GM13976 (cell line): ENCODE measurements at regions of chr1 and their contacts with region 1.

Region 1: GRCh38 chr1:244796718-244797406 is 38.6 kb upstream of the COX20 start:
- DNase-seq: peak; percentile 57
- CTCF ChIP-seq: peak; percentile 83

Region 2: DNA sequence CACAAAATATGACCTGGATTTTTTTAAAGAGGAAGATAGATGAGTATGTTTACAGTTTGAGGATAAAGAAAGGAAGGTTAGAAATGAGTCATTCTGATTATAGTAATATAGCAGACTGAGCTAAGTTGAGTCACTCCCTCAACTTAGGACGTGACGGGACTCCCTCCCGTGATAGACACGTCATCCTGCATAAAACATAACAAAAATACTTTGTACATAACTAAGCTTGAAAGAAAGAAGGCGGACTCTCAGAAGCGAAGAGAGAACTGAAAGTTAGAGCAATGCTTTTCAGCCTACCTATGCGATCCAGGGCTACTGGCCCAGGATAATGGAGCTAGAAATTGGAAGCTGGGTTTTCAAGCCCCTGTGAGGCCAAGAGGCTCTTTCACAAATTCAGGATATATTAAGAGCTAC is 196.9 kb before region 1 on chr1:
- in situ Hi-C with region 1: loop called (anchors 10 kb)
- DNase-seq: peak; percentile 77
- CTCF ChIP-seq: no peak

Region 3: DNA sequence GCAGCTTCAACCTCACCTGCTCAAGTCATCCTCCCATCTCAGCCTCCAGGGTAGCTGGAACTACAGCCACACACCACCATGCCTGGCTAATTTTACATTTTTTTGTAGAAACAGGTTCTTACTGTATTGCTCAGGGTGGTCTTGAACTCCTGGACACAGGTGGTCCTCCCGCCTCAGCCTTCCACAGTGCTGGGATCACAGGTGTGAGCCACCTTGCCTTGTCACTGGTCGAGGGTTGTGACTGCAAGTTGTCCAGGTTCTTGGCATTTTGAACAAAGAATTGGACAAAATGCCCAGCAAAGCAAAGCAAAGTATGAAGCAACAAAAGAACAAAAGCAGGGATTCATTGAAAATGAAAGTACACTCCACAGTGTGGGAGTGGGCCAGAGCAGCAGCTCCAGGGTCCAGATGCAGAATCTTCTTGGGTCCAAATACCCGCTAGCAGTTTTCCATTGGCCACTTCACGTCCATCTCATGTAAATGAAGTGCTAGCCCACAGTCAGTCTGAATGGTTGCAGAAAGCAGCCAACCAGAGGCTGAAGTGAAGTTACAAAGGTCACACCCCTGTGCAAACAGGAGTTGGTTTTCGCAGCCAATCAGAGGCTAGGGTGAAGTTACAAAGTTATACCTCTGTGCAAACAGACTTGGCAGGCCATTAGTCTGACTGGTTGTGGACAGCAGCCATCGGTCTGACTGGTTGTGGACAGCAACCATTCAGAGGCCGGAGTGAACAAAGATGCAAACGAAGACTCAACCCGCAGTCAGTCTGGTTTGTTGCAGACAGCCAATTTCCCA is 248.4 kb after region 1 on chr1:
- in situ Hi-C with region 1: loop called (anchors 5 kb)
- DNase-seq: no peak
- CTCF ChIP-seq: no peak